Naive thymus-derived CD4-positive, alpha-beta T cell (primary cell): ENCODE measurements at regions of chr4 and their contacts with region 1.

Region 1: DNA sequence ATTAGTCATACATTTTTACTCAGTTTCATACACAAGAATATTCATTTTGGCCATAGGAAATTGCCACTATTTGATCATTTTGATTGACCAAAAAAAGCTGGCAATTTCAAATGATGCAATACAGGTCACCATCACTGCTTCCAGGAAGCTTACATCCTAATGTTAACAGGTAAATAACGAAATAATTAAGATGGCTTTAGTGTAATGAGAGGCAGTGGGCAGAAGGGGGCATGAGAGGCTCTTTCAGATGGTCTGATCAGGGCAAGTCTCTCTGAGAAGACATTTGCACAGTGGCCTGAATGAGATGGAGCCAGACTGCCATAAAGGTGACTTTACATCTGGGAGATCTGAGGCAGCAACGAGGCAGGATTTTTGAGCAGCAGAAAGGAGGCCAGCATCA is 170.7 kb downstream of the SLIT2 start:
- DNase-seq: peak in 4 of 9 donors; percentile 2 to 17 (median 11)
- ATAC-seq: peak; percentile 64
- H3K4me3 ChIP-seq: no peak overlapping the region
- H3K4me3 Mint-ChIP-seq: no peak overlapping the region
- H3K27ac ChIP-seq: no peak overlapping the region
- H3K27ac Mint-ChIP-seq: no peak overlapping the region
- H3K4me1 ChIP-seq: no peaks in the 10 kb centered on the region
- H3K4me1 Mint-ChIP-seq: peaks cover 0 to 15% (median 5%) of the 10 kb centered on the region in 7 donors
- H3K27me3 ChIP-seq: no peaks in the 10 kb centered on the region
- H3K27me3 Mint-ChIP-seq: peaks cover 4 to 13% (median 5%) of the 10 kb centered on the region in 5 donors

Region 2: GRCh38 chr4:18689308-18690115 is 1732.9 kb before region 1 on chr4:
- CTCF ChIA-PET with region 1: no interaction called
- POLR2A ChIA-PET with region 1: no interaction called
- intact Hi-C with region 1: loop called (anchors 10 kb)
- DNase-seq: peak in 8 of 9 donors; percentile 3 to 28 (median 14)
- ATAC-seq: no peak
- H3K4me3 ChIP-seq: no peak overlapping the region
- H3K4me3 Mint-ChIP-seq: no peak overlapping the region
- H3K27ac ChIP-seq: no peak overlapping the region
- H3K27ac Mint-ChIP-seq: no peak overlapping the region
- H3K4me1 ChIP-seq: no peaks in the 10 kb centered on the region
- H3K4me1 Mint-ChIP-seq: no peaks in the 10 kb centered on the region
- H3K27me3 ChIP-seq: peaks cover 3 to 10% of the 10 kb centered on the region in 2 donors
- H3K27me3 Mint-ChIP-seq: peaks cover 7 to 21% (median 9%) of the 10 kb centered on the region in 5 donors

Region 3: GRCh38 chr4:20572976-20573375 is 150.6 kb after region 1 on chr4:
- CTCF ChIA-PET with region 1: no interaction called
- POLR2A ChIA-PET with region 1: no interaction called
- intact Hi-C with region 1: no loop called
- DNase-seq: no peak
- ATAC-seq: no peak
- H3K4me3 ChIP-seq: no peak overlapping the region
- H3K4me3 Mint-ChIP-seq: no peak overlapping the region
- H3K27ac ChIP-seq: no peak overlapping the region
- H3K27ac Mint-ChIP-seq: no peak overlapping the region
- H3K4me1 ChIP-seq: no peaks in the 10 kb centered on the region
- H3K4me1 Mint-ChIP-seq: no peaks in the 10 kb centered on the region
- H3K27me3 ChIP-seq: no peaks in the 10 kb centered on the region
- H3K27me3 Mint-ChIP-seq: peaks cover 0 to 11% (median 0%) of the 10 kb centered on the region in 5 donors

Region 4: DNA sequence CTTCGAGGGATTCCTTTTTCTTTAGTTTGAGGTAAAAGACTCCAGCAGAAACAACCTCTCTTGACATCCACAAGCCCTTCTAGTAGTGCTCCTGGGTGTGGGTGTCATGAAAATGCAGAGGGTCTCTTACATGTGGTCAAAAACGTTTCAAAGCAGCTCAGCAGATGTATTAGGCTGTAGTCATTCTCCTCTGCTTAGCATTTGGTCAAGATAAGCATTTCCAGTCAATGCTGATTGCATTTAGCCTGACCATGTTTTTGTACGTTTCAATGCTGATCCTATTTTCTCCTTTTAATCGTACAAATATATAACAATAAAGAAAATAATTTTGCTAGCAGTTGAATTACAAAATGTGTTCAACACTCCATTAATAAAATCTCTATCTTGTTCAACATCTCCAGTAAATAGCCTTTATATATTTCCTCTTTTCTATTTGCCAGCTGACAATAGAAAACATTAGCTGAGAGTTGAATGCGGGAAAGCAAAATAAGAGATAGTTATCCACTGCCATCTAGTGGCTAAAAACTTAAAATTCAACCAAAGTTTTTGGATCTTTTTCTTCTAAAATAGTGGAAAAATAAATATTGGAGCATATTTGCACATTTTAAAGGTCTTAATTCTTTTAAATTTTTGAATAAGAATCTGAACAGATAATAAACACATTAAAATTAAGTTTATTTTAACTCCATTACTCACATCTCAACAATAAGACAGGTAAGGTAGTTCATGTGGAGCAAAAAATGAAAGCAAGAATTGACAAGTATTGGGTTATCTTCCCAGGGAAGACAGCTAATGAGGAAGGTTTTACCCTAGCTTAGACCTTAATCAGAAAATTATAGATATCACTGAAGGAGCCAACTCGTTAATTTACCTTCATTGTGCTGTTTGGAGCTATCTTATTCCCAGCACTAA is 262.7 kb after region 1 on chr4:
- CTCF ChIA-PET with region 1: interaction called, 3 read pairs
- POLR2A ChIA-PET with region 1: no interaction called
- intact Hi-C with region 1: loop called (anchors 1 kb)
- DNase-seq: peak in 4 of 9 donors; percentile 7 to 27 (median 24)
- ATAC-seq: peak; percentile 37
- H3K4me3 ChIP-seq: no peak overlapping the region
- H3K4me3 Mint-ChIP-seq: no peak overlapping the region
- H3K27ac ChIP-seq: no peak overlapping the region
- H3K27ac Mint-ChIP-seq: no peak overlapping the region
- H3K4me1 ChIP-seq: no peaks in the 10 kb centered on the region
- H3K4me1 Mint-ChIP-seq: no peaks in the 10 kb centered on the region
- H3K27me3 ChIP-seq: peaks cover 0 to 3% of the 10 kb centered on the region in 2 donors
- H3K27me3 Mint-ChIP-seq: peaks cover 0 to 17% (median 14%) of the 10 kb centered on the region in 5 donors

Region 5: GRCh38 chr4:20773144-20773997 is 351.0 kb after region 1 on chr4:
- CTCF ChIA-PET with region 1: interaction called, 3 read pairs
- POLR2A ChIA-PET with region 1: no interaction called
- intact Hi-C with region 1: loop called in 1 of 2 experiments (anchors 10 kb)
- DNase-seq: peak in 3 of 9 donors; percentile 6 to 10 (median 7)
- ATAC-seq: peak; percentile 57
- H3K4me3 ChIP-seq: no peak overlapping the region
- H3K4me3 Mint-ChIP-seq: no peak overlapping the region
- H3K27ac ChIP-seq: no peak overlapping the region
- H3K27ac Mint-ChIP-seq: no peak overlapping the region
- H3K4me1 ChIP-seq: no peaks in the 10 kb centered on the region
- H3K4me1 Mint-ChIP-seq: peaks cover 0 to 4% (median 0%) of the 10 kb centered on the region in 7 donors
- H3K27me3 ChIP-seq: no peaks in the 10 kb centered on the region
- H3K27me3 Mint-ChIP-seq: peaks cover 0 to 11% (median 10%) of the 10 kb centered on the region in 5 donors

Region 6: DNA sequence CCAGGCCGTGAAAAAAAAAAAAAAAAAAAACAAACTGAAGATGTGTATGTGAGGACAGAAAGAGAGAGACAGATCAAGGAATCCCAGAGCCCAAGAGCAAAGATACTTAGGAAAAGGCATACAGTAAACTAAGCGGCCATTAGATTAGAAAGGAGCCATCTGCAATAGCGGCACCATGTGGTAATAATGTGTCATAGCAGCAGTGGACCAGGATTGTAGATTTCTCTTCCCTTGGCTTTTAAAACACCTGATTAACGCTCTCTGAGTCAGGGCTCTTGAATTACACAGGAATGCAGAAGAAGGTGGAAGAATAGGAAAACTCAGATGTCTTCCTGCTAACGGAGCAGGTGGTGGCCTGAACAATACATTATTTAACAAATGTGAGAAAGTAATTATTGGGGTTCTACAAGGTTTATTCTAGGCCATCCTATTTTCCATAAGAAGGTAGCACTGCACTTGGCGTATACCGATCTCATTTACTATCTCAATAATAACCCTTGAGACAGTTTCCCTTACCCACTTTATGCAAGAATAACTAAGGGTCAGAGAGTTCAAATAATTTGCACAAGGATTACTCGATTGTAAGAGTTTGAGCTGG is 1343.5 kb after region 1 on chr4:
- CTCF ChIA-PET with region 1: interaction called, 3 read pairs
- POLR2A ChIA-PET with region 1: no interaction called
- intact Hi-C with region 1: loop called (anchors 1 to 2 kb)
- DNase-seq: peak in 2 of 9 donors; percentile 11 to 12
- ATAC-seq: peak; percentile 59
- H3K4me3 ChIP-seq: no peak overlapping the region
- H3K4me3 Mint-ChIP-seq: no peak overlapping the region
- H3K27ac ChIP-seq: no peak overlapping the region
- H3K27ac Mint-ChIP-seq: peak overlapping the region in 1 of 9 donors; percentile 68
- H3K4me1 ChIP-seq: no peaks in the 10 kb centered on the region
- H3K4me1 Mint-ChIP-seq: peaks cover 0 to 3% (median 0%) of the 10 kb centered on the region in 7 donors
- H3K27me3 ChIP-seq: no peaks in the 10 kb centered on the region
- H3K27me3 Mint-ChIP-seq: peaks cover 0 to 17% (median 7%) of the 10 kb centered on the region in 5 donors